Posterior vena cava (tissue), 2 donors: ENCODE measurements at regions of chr19 and their contacts with region 1.

Region 1: DNA sequence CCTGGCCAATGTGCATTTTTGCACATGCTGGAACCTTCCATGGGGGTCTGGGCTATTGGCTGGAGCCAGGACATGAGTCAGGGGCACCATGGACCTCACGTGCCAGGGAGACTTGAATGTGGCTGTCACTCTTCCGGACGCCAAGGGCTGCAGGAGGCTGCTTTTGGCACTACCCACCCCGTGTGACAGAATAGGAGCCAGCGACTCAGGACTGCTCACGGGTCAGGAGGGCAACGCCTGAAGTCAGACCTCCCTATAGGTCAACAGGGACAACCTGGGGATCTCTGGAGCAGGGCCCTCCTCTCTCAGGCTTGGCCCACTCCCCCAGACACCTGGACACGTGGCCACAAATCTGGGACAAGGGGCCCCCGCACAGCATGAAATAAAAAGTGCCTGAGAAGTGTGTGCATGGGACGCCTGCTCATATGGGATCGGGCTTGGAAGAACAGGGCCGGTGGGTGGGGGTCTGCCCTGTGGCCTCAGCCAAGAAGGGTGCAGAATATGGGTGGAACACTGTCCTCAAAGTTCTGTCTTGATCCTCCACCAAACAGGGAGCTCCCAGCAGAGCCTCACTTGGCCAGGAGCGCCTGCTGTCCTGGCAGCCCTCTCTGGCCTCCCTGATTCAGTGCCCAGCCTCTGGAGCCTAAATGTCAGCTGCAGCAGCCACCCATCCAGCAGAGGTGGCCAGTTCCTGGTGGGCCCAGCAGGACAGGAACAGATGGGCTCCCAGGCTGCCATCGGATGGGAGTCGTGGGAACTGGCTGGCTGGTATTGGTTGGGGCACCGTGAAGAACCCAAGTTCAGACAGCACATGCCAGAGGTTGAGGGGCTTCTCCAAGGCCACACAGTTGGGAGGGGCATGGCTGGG is 2.0 kb upstream of the USE1 start:
- DNase-seq: no peak

Region 2: GRCh38 chr19:17135001-17135853 is 77.9 kb before region 1 on chr19:
- intact Hi-C with region 1: no loop called
- DNase-seq: peak; percentile 98

Region 3: DNA sequence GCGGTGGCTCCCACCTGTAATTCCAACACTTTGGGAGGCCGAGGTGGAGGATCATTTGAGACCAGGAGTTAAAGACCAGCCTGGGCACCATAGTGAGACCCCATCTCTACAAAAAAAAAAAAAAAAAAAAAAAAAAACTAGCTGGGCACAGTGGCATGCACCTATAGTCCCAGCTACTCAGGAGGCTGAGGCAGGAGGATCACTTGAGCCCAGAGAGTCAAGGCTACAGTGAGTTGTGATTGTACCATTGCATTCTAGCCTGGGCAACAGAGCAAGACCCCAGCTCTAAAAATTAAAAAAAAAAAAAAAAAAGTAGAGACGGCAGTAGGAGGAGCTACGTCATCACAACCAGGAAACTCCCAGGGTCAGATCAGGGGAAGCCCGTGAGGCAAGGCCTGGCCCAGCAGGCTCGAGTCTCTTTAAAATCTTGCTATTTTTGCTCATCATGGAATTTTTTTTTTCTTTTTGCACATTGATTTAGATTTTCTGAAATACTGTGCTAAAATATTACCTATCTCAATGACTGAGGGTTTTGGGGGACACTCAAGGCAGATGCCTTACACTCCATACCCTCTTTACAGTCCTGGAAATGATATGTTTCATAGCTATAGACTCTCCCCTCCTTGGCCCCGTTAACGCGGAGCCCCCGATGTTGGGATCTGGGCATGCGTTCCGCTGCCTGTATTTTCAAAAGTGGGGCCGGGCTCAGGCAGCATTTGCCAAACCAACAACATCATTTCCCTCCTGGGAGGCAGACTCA is 42.4 kb before region 1 on chr19:
- intact Hi-C with region 1: no loop called
- DNase-seq: no peak

Region 4: DNA sequence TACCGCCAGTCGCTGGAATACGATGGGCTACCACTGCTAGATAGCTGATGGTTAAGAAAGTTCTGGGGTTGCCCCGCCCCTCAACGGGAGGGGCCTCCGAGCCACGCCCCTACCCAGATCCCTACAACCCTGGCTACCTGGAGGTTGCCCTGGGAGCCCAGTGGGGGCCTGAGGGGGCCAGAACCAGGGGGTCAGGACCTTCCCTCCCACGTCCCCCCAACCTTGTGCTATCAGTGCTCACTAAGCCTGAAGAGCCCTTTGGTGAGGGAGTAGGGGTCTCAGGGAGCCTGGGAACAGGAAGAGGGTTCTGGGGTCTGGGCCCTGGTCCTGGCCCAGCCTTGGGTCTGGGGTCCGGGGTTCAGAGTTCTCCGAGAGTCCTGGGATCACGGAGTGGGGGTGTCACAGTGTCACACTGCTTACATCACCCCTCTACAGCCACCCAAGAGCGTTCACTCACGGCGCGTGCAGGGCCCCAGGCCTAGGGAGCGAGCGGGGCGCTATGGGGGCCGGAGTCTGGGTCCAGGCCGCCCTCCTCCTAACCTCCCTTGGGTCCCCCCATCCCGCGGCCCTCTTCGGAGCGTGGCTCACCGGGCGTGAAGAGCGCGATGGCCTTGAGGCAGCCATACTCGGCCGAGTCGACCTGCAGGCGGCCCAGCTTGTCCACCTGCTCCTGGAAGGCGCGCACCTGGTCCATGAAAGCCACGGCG is 21.9 kb after region 1 on chr19:
- intact Hi-C with region 1: loop called in 1 of 2 experiments (anchors 1 kb)
- DNase-seq: peak; percentile 87